ENCODE measurements at regions of chr21 and their contacts with region 1.

Region 1: DNA sequence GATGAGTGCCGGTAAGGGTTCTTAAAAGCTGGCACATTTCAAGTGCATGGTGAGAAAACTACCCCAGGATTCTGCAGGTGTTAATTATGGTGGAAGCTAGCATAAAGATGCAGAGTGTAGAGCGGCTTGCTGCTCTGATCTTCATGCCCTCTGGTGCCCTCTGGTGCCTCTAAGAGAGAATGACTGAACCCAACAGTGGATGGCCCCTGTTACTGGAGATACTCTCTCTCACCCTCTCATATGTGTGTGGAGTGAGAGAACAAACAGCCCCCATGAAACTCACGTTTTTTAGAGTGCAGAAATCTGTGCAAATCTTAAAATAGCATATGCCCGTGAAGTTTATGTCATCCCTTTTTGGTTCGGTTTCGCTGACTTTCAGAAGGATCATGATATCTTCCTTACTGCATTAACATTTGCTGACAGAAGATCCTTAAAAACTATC is 90.0 kb downstream of the GRIK1 start:
- DNase-seq: peak in 8 of 9 donors; percentile 5 to 56 (median 35)
- ATAC-seq: peak; percentile 91
- H3K4me3 ChIP-seq: no peak overlapping the region
- H3K4me3 Mint-ChIP-seq: no peak overlapping the region
- H3K27ac ChIP-seq: no peak overlapping the region
- H3K27ac Mint-ChIP-seq: no peak overlapping the region
- H3K4me1 ChIP-seq: no peaks in the 10 kb centered on the region
- H3K4me1 Mint-ChIP-seq: no peaks in the 10 kb centered on the region
- H3K27me3 ChIP-seq: no peaks in the 10 kb centered on the region
- H3K27me3 Mint-ChIP-seq: peaks cover 7 to 20% (median 9%) of the 10 kb centered on the region in 5 donors

Region 2: GRCh38 chr21:29232601-29233546 is 616.9 kb before region 1 on chr21:
- CTCF ChIA-PET with region 1: no interaction called
- POLR2A ChIA-PET with region 1: no interaction called
- intact Hi-C with region 1: loop called in 1 of 2 experiments (anchors 1 kb)
- DNase-seq: peak in 2 of 9 donors; percentile 3 to 8
- ATAC-seq: peak; percentile 24
- H3K4me3 ChIP-seq: no peak overlapping the region
- H3K4me3 Mint-ChIP-seq: peak overlapping the region in 1 of 10 donors; percentile 40
- H3K27ac ChIP-seq: no peak overlapping the region
- H3K27ac Mint-ChIP-seq: peak overlapping the region in 1 of 9 donors; percentile 45
- H3K4me1 ChIP-seq: no peaks in the 10 kb centered on the region
- H3K4me1 Mint-ChIP-seq: peaks cover 5 to 40% (median 6%) of the 10 kb centered on the region in 7 donors
- H3K27me3 ChIP-seq: no peaks in the 10 kb centered on the region
- H3K27me3 Mint-ChIP-seq: peaks cover 0 to 14% (median 0%) of the 10 kb centered on the region in 5 donors

Region 3: DNA sequence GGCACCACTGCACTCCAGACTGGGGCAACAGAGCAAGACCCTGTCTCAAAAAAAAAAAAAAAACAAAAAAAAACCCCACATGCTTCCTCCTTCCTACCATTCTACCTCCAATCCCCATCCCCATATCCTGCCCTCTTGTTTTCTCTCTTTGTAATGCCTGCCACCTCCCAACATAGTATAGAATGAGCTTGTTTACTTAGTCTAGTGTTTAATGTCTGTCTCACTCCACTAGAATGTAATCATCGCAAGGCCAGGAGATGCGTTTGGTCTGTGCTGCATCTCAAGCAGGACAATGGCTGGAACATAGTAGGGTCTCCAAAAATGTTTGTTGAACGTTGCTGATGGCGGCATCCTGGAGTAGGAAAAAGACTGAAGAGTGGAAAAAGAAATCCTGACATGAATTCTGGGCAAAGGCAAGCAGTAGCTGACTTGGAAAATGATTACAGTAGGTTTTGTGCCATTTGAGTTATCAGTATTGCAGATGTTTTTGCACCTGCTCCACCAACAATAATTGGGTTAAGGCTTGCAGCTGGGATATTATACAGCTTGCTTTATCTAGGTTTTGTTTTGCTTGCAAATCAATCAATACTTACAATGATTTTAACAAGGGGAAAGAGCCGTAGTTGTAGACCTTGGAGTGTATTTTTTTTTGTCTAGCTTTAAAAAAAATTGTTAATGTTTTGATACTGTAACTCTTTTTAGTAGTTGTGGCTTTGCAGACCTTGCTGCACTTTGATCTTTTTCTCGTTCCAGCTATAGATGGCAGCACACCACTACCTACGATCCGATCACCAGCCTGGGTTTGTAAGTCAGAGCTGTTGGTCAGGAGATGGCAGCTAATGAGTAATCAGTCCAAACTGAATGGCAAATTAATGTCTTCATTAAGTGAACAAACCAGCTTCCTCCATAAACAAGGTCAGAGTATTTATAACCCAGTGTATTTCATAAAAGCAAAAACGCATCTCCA is 488.7 kb before region 1 on chr21:
- CTCF ChIA-PET with region 1: interaction called, 12 read pairs
- POLR2A ChIA-PET with region 1: no interaction called
- intact Hi-C with region 1: no loop called
- DNase-seq: peak in 4 of 9 donors; percentile 11 to 48 (median 36)
- ATAC-seq: no peak
- H3K4me3 ChIP-seq: no peak overlapping the region
- H3K4me3 Mint-ChIP-seq: no peak overlapping the region
- H3K27ac ChIP-seq: no peak overlapping the region
- H3K27ac Mint-ChIP-seq: peak overlapping the region in 1 of 9 donors; percentile 70
- H3K4me1 ChIP-seq: no peaks in the 10 kb centered on the region
- H3K4me1 Mint-ChIP-seq: peaks cover 4 to 21% (median 11%) of the 10 kb centered on the region in 7 donors
- H3K27me3 ChIP-seq: no peaks in the 10 kb centered on the region
- H3K27me3 Mint-ChIP-seq: no peaks in the 10 kb centered on the region

Region 4: GRCh38 chr21:29477941-29478340 is 371.8 kb before region 1 on chr21:
- CTCF ChIA-PET with region 1: interaction called, 3 read pairs
- POLR2A ChIA-PET with region 1: no interaction called
- intact Hi-C with region 1: loop called (anchors 1 kb)
- DNase-seq: no peak
- ATAC-seq: no peak
- H3K4me3 ChIP-seq: no peak overlapping the region
- H3K4me3 Mint-ChIP-seq: no peak overlapping the region
- H3K27ac ChIP-seq: no peak overlapping the region
- H3K27ac Mint-ChIP-seq: peak overlapping the region in 1 of 9 donors; percentile 5
- H3K4me1 ChIP-seq: no peaks in the 10 kb centered on the region
- H3K4me1 Mint-ChIP-seq: peaks cover 3 to 18% (median 11%) of the 10 kb centered on the region in 7 donors
- H3K27me3 ChIP-seq: no peaks in the 10 kb centered on the region
- H3K27me3 Mint-ChIP-seq: no peaks in the 10 kb centered on the region